ENCODE measurements at regions of chr6 and their contacts with region 1.

Region 1: GRCh38 chr6:150813319-150813992 is 52.0 kb upstream of the MTHFD1L start:
- DNase-seq: no peak
- H3K4me3 ChIP-seq: no peak overlapping the region
- H3K27ac ChIP-seq: no peak overlapping the region
- H3K4me1 ChIP-seq: no peaks in the 10 kb centered on the region
- H3K27me3 ChIP-seq: no peaks in the 10 kb centered on the region
- CTCF ChIP-seq: no peak
- EP300 ChIP-seq: no peak
- POLR2A ChIP-seq: no peak

Region 2: DNA sequence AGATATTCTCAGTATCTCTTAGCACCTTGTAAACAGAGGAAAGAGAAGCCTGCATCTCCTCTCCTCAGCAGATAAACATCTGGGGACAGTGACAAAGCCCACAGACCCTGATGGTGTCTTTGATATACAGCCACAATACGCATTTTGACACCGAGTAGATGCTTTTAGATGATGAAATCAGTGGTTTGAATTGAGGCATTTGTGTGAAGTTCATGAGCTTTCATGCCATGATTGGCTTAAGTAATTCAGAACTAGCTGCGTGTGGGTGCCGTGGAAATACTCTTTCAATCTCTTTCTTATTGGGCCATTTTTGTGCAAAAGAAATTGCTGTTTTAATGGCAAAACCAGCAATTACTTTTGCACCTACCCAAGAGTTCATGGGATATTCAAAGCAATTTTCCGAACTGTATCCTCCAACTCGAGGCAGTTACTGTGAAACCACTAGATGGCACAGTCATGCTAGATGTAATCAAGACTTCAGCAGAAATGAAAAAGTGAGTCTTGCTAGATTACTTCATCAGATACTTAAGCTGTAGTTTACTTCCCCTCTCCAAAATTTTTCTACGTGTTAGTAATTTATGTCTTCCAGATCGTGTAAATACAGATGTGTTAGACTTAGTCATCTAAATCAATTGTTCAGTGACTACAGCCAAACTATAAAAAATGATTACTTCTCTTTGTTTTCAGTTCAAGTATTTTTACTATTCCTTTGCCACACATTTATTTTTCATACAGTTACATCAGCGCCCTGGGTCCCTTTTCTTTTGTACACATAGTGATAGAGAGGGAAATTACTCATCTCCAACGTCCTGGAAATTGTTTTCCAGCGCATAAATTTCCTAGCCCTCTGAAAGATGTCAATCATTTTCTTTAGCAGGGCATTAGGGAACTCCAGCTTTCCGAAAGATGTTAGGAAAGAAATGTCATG is 395.3 kb before region 1 on chr6:
- intact Hi-C with region 1: loop called (anchors 2 to 5 kb)
- DNase-seq: no peak
- H3K4me3 ChIP-seq: peak overlapping the region; percentile 27
- H3K27ac ChIP-seq: no peak overlapping the region
- H3K4me1 ChIP-seq: peaks cover 2% of the 10 kb centered on the region
- H3K27me3 ChIP-seq: no peaks in the 10 kb centered on the region
- CTCF ChIP-seq: peak; percentile 45 to 75 (median 48)
- EP300 ChIP-seq: no peak
- POLR2A ChIP-seq: no peak

Region 3: DNA sequence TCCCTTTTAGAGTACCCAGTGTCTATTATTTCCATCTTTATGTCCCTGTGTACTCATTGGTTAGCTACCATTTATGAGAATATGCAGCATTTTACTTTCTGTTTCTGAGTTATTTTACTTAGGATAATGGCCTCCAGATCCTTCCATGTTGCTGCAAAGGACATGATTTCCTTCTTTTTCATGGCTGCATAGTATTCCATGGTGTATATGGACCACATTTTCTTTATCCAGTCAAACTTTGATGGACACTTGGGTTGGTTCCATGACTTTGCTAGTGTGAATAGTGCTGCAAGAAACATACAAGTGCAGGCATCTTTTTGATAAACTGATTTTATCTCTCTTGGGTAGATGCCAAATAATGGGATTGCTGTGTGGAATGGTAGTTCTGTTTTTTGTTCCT is 522.5 kb after region 1 on chr6:
- intact Hi-C with region 1: loop called in 1 of 4 experiments (anchors 2 kb)
- DNase-seq: no peak
- H3K4me3 ChIP-seq: no peak overlapping the region
- H3K27ac ChIP-seq: no peak overlapping the region
- H3K4me1 ChIP-seq: no peaks in the 10 kb centered on the region
- H3K27me3 ChIP-seq: no peaks in the 10 kb centered on the region
- CTCF ChIP-seq: no peak
- EP300 ChIP-seq: no peak
- POLR2A ChIP-seq: no peak